Pancreas (tissue), 10 donors: ENCODE measurements at regions of chr10 and their contacts with region 1.

Region 1: GRCh38 chr10:29841724-29842649 is 207.2 kb upstream of the SVIL start:
- DNase-seq: peak in 5 of 6 donors; percentile 25 to 68 (median 33)
- ATAC-seq: peak; percentile 61 to 75 (median 64)
- H3K4me3 ChIP-seq: no peak overlapping the region
- H3K27ac ChIP-seq: peak overlapping the region in 1 of 4 donors; percentile 62
- H3K4me1 ChIP-seq: peaks cover 9 to 22% (median 10%) of the 10 kb centered on the region in 3 donors
- H3K27me3 ChIP-seq: no peaks in the 10 kb centered on the region
- CTCF ChIP-seq: no peak

Region 2: DNA sequence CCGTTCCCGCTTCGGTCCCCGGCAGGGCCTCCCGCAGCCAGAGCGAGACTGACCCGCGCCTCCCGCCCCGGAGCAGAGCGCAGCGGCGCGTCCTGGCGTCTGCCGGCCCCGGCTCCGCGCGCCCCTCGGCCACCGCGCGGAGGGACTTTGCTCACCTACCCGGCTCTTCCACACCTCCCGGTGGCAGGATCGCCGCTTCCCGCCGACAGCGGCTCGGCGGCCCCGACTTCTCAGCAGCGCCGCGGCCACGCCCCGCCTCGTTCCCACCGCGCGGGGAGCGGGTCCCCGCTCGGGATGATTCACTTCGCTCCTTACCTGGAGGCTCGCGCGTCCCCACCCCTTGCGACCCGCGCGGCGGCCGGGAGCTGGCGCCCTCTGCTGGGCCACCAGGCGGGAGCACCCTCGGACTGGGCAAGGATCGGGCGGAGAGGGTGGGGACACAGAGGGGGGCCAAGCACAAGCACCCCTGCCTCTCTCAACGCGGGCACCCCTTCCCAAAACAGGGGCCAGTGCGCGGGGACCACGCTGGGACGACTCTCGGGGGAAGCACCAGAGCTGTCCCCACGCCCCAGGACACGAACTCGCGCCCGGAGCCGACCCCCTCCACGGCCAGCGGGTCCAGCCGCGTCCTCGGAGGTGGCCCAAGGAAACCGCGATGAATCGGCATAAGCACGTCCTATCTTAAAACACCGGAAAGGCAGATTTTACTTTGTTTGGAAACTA is 106.2 kb before region 1 on chr10:
- intact Hi-C with region 1: loop called in 1 of 3 experiments (anchors 10 kb)
- DNase-seq: peak; percentile 84 to 97 (median 92)
- ATAC-seq: peak; percentile 89 to 96 (median 90)
- H3K4me3 ChIP-seq: peak overlapping the region; percentile 78 to 92 (median 82)
- H3K27ac ChIP-seq: peak overlapping the region; percentile 86 to 96 (median 96)
- H3K4me1 ChIP-seq: peaks cover 0 to 12% (median 0%) of the 10 kb centered on the region in 3 donors
- H3K27me3 ChIP-seq: no peaks in the 10 kb centered on the region
- CTCF ChIP-seq: peak; percentile 86 to 92 (median 89)